HCT116 (cell line): ENCODE measurements at regions of chr2 and their contacts with region 1.

Region 1: DNA sequence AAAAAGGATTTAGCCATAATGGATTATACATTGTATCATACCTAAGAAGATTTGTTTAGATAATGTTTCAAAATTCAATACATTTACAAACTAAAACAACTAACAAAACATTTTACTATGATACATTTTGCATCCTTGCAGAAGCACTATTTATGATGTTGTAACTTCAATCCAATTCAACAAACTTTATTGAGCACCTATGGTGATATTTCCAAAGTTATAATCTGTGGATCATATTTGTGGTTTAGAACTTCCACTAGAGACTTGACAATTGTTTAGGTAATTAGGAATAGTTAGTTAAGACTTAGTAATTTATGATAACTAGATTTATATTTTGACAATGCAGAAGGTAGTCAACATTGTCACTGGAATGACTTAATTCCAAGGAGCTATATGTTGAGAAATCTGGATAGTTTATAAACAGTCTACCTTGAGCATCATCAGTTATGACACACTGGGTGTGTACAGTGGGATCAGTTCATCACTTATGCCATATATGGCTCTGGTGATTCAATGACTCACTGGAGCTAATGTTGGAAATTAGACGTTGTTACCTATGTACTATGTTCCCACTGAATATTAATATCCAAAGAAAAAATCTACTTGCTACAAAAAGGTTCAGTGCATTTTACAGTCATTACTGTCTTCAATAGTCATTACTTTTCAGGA is 34.2 kb upstream of the ITPRID2 start:
- DNase-seq: peak; percentile 27
- ATAC-seq: peak; percentile 58; the same call in 1 of the 2 replicates
- H3K4me3 ChIP-seq: no peak overlapping the region
- H3K27ac ChIP-seq: no peak overlapping the region
- H3K4me1 ChIP-seq: peaks cover 9 to 40% of the 10 kb centered on the region in 2 experiments
- H3K27me3 ChIP-seq: no peaks in the 10 kb centered on the region
- CTCF ChIP-seq: no peak
- POLR2A ChIP-seq: no peak
- RAD21 ChIP-seq: no peak

Region 2: DNA sequence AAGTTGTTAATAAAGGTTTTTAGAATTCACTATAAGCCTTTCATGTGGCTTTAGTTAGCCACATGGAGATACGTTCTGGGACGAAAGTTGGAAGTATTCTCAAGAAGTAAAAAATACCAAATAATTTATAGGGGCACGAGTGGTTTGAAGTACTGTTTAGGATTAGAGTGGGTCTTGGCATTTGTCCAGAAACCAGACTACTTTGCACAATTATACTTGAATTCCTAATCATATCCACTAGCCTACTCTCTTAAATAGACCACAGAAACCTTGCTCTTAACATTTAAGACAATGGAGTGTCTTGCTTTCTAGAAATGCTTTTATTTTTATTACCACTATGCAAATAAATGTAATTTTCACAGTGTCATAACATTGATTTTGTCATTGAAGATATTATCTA is 832.3 kb before region 1 on chr2:
- CTCF ChIA-PET with region 1: no interaction called
- POLR2A ChIA-PET with region 1: no interaction called
- RAD21 ChIA-PET with region 1: no interaction called
- intact Hi-C with region 1: no loop called
- DNase-seq: no peak
- ATAC-seq: no peak
- H3K4me3 ChIP-seq: no peak overlapping the region
- H3K27ac ChIP-seq: no peak overlapping the region
- H3K4me1 ChIP-seq: no peaks in the 10 kb centered on the region
- H3K27me3 ChIP-seq: no peaks in the 10 kb centered on the region
- CTCF ChIP-seq: no peak
- POLR2A ChIP-seq: no peak
- RAD21 ChIP-seq: no peak

Region 3: GRCh38 chr2:181823405-181823804 is 33.9 kb before region 1 on chr2:
- CTCF ChIA-PET with region 1: interaction called, 5 read pairs
- POLR2A ChIA-PET with region 1: no interaction called
- RAD21 ChIA-PET with region 1: no interaction called
- intact Hi-C with region 1: loop called (anchors 5 kb)
- DNase-seq: no peak
- ATAC-seq: peak; percentile 33; the same call in 1 of the 2 replicates
- H3K4me3 ChIP-seq: no peak overlapping the region
- H3K27ac ChIP-seq: no peak overlapping the region
- H3K4me1 ChIP-seq: peaks cover 28 to 56% of the 10 kb centered on the region in 2 experiments
- H3K27me3 ChIP-seq: no peaks in the 10 kb centered on the region
- CTCF ChIP-seq: no peak
- POLR2A ChIP-seq: no peak
- RAD21 ChIP-seq: no peak